ENCODE measurements at regions of chr9 and their contacts with region 1.

Region 1: DNA sequence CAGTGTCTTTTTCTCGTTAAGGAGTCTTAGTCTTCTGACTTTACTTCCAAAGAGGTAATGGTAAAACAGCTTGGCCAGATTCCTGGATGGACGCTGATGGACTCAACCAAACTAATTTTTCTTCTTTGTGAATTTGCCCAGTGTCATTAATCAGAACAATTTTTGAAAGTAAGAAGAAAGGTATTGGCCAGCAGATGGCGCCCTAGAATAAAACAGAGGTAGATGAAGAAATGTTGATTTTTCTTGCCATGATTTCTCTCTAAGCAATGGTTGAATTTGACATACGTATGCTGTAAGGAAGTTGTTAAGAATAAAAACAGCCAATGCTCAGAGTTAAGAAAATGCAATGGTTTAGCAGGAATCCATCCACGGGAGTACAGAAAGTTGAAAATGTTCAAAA is 500.0 kb downstream of the DIRAS2 start:
- DNase-seq: no peak
- H3K4me3 ChIP-seq: no peak overlapping the region
- CTCF ChIP-seq: peak; percentile 21

Region 2: GRCh38 chr9:90870621-90871326 is 728.2 kb after region 1 on chr9:
- CTCF ChIA-PET with region 1: interaction called, 54 read pairs
- POLR2A ChIA-PET with region 1: no interaction called
- DNase-seq: no peak
- H3K4me3 ChIP-seq: no peak overlapping the region
- CTCF ChIP-seq: peak; percentile 73

Measured in AG04449 (cell line).